Dendritic cell treated with granulocyte-macrophage colony-stimulating factor and Interleukin-4, amounts not matched to agents 40 ng/mL and 50 ng/mL, for 4 days (primary cell): ENCODE measurements at regions of chr3 and their contacts with region 1.

Region 1: DNA sequence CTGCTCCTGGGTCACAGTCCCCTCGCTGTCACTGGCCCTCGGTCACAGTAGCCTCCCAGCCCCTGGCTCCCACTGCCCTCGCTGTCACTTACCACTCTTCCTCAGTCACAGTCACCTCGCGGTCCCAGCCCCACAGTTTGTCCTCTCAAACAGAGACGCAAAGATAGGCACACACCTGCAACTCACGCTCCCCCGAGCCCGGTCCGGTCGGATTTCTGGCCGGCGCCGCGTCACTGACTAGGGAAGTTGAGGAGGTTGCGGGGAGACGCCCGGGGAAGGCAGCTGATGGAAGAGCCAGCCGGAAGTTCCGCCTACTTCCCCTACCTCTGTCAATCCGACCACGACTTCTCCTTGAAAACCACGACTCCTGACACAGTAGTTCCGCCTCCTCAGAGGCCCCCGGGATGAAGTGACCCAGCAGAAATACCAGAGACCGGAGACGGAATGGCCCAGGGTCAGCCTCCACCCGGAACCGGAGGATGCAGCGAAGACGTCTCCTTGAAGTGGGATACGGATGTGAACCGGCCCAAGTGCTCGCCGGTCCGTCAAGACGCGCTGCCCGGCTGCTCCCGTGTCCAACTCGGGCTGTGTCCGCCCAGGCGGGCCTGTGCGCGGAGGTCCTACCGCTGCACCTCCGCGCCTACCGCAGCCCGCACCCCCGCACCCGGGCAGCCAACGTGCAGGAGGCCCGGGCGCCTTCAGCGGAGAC is at the start of gene PCYT1A:
- H3K4me3 Mint-ChIP-seq: peak within 1 kb of the TSS; percentile 99
- H3K27ac Mint-ChIP-seq: peak within 1 kb of the TSS; percentile 97
- H3K4me1 Mint-ChIP-seq: peaks cover 26% of the 10 kb centered on the region
- H3K27me3 Mint-ChIP-seq: no peaks in the 10 kb centered on the region

Region 2: GRCh38 chr3:195914648-195915473 is 372.7 kb before region 1 on chr3:
- intact Hi-C with region 1: no loop called
- H3K4me3 Mint-ChIP-seq: no peak overlapping the region
- H3K27ac Mint-ChIP-seq: peak overlapping the region; percentile 38
- H3K4me1 Mint-ChIP-seq: peaks cover 28% of the 10 kb centered on the region
- H3K27me3 Mint-ChIP-seq: peaks cover 26% of the 10 kb centered on the region

Region 3: GRCh38 chr3:196268270-196269163 is 19.1 kb before region 1 on chr3:
- intact Hi-C with region 1: no loop called
- H3K4me3 Mint-ChIP-seq: no peak overlapping the region
- H3K27ac Mint-ChIP-seq: peak overlapping the region; percentile 23
- H3K4me1 Mint-ChIP-seq: peaks cover 34% of the 10 kb centered on the region
- H3K27me3 Mint-ChIP-seq: no peaks in the 10 kb centered on the region

Region 4: DNA sequence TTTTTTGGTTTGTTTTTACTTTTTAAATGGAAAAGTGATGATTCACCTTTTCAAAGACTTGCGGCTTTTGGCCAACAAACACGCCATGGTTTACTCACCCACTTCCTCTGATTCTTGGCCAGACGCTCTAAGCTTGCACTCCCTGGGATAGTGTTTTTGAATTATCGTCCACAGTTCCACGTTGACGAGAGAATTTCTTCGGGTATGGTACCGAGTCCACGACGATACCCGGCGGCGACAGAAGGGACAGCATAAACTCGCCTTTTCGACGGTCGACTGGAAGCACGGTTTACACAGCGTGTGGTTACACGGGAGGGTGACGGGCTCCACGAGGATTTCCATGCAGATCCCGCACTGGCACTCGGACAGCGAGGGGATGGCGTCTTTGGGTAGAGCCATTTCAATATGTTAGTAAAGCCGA is 215.2 kb after region 1 on chr3:
- intact Hi-C with region 1: loop called (anchors 1 kb)
- H3K4me3 Mint-ChIP-seq: peak overlapping the region; percentile 89
- H3K27ac Mint-ChIP-seq: peak overlapping the region; percentile 93
- H3K4me1 Mint-ChIP-seq: peaks cover 41% of the 10 kb centered on the region
- H3K27me3 Mint-ChIP-seq: no peaks in the 10 kb centered on the region